ENCODE measurements at regions of chr10 and their contacts with region 1.

Region 1: DNA sequence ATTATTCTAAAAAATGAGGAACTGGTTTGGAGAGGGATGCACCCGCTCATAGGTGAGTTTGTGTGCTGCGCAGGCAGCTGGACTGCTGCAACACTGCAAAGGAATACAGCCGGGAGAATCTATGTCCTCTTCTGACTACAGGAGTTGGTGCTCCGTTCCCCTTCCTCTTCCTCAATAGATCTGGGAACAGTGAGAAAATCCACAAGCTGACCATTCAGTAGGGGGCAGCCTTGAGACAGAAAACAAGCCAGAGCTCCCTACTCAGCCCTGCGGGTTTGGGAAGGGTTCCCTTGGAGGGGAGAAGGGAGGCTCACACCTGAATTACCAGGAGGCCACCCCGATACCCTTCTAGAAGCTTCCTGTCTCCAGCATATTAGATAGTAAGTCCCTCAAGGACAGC is 87.3 kb upstream of the FOXI2 start:
- DNase-seq: peak; percentile 78
- ATAC-seq: peak; percentile 99
- H3K4me3 Mint-ChIP-seq: no peak overlapping the region
- H3K27ac Mint-ChIP-seq: no peak overlapping the region
- H3K4me1 Mint-ChIP-seq: no peaks in the 10 kb centered on the region
- H3K27me3 Mint-ChIP-seq: no peaks in the 10 kb centered on the region
- CTCF ChIP-seq: peak; percentile 27; the same call in 1 of the 2 replicates

Region 2: DNA sequence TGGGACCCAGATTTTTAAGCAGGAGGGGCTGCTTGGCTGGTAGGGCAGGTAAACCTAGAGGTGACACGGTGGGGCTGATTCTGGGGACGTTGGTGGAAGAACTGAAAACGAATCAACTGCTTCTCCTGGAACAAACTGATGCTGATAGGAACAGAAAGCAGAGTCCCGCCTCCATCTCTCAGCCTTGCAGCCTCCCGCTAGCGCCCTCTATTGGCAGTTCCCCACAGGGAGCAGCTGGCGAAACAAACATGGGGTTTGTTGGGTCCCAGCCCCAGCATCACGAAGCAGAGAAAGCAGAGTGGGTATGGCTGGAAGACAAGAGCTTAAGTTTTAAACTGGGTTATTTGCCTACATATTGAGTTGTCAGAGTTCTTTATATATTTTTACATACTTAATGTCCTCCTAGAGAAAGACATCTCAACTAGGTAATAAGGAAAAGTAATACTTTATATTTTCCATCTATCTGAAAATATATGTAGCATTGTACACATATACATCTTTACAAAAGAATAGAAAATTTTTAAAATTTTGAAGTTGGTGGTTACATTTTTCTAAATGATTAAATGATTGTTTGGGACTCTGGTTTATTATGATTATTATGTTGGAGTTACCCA is 45.0 kb after region 1 on chr10:
- CTCF ChIA-PET with region 1: interaction called, 13 read pairs
- POLR2A ChIA-PET with region 1: no interaction called
- DNase-seq: peak; percentile 93
- ATAC-seq: peak; percentile 90
- H3K4me3 Mint-ChIP-seq: no peak overlapping the region
- H3K27ac Mint-ChIP-seq: no peak overlapping the region; the same call in 1 of the 2 replicates
- H3K4me1 Mint-ChIP-seq: peaks cover 33% of the 10 kb centered on the region
- H3K27me3 Mint-ChIP-seq: no peaks in the 10 kb centered on the region
- CTCF ChIP-seq: peak; percentile 79

Region 3: GRCh38 chr10:127945335-127945734 is 295.7 kb after region 1 on chr10:
- CTCF ChIA-PET with region 1: no interaction called
- POLR2A ChIA-PET with region 1: no interaction called
- DNase-seq: no peak
- ATAC-seq: no peak
- H3K4me3 Mint-ChIP-seq: no peak overlapping the region
- H3K27ac Mint-ChIP-seq: no peak overlapping the region
- H3K4me1 Mint-ChIP-seq: no peaks in the 10 kb centered on the region
- H3K27me3 Mint-ChIP-seq: no peaks in the 10 kb centered on the region; the same call in 1 of the 2 replicates
- CTCF ChIP-seq: no peak